Upper lobe of right lung (tissue), 1 donor: ENCODE measurements at regions of chr2 and their contacts with region 1.

Region 1: DNA sequence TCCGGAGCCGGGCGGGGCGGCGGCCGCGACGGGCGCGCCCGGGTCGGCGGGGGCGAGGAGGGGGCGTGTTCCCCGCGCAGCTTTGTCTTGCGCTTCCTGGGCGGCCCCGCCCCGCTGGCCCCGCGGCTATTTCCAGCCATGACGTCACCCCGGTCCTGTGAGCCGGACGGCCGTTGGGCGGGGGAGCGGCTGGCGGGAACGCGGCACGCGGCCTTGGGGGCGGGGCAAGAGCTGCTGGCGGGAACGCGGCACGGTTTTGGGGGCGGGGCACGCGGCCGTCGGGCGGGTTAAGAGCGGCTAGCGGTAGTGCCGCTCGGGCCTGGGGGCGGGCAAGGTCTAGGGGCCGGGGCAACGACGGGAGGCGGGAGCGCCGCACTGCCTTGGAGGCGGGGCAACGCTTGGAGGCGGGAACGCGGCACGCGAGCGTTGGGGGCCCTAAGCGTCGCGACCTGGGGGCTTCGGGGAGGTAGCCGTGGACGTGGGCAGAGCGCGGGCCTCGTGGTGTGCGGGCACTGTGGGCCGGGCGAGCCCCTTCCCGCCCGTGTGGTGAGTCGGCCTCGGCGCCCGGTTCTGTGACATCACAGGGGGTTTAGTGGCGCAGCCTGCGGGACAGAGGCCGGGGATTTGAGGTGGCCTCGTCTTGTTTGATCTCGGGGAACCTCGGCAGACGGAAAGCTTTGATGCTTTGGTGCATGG is 704 bp downstream of the KLF11 start:
- DNase-seq: peak; percentile 99
- ATAC-seq: peak; percentile 84
- H3K4me3 ChIP-seq: peak overlapping the region; percentile 66
- H3K27ac ChIP-seq: peak overlapping the region; percentile 91
- H3K4me1 ChIP-seq: peaks cover 50% of the 10 kb centered on the region
- H3K27me3 ChIP-seq: no peaks in the 10 kb centered on the region
- CTCF ChIP-seq: no peak

Region 2: GRCh38 chr2:9739531-9739964 is 304.5 kb before region 1 on chr2:
- intact Hi-C with region 1: no loop called
- DNase-seq: peak; percentile 77
- ATAC-seq: peak; percentile 78
- H3K4me3 ChIP-seq: peak overlapping the region; percentile 39
- H3K27ac ChIP-seq: peak overlapping the region; percentile 69
- H3K4me1 ChIP-seq: peaks cover 8% of the 10 kb centered on the region
- H3K27me3 ChIP-seq: no peaks in the 10 kb centered on the region
- CTCF ChIP-seq: no peak

Region 3: GRCh38 chr2:9813312-9814133 is 230.5 kb before region 1 on chr2:
- intact Hi-C with region 1: loop called (anchors 5 kb)
- DNase-seq: peak; percentile 84
- ATAC-seq: peak; percentile 87
- H3K4me3 ChIP-seq: no peak overlapping the region
- H3K27ac ChIP-seq: no peak overlapping the region
- H3K4me1 ChIP-seq: peaks cover 11% of the 10 kb centered on the region
- H3K27me3 ChIP-seq: no peaks in the 10 kb centered on the region
- CTCF ChIP-seq: peak; percentile 90

Region 4: GRCh38 chr2:9830690-9831410 is 213.2 kb before region 1 on chr2:
- intact Hi-C with region 1: no loop called
- DNase-seq: no peak
- ATAC-seq: peak; percentile 81
- H3K4me3 ChIP-seq: no peak overlapping the region
- H3K27ac ChIP-seq: peak overlapping the region; percentile 80
- H3K4me1 ChIP-seq: no peaks in the 10 kb centered on the region
- H3K27me3 ChIP-seq: no peaks in the 10 kb centered on the region
- CTCF ChIP-seq: no peak

Region 5: DNA sequence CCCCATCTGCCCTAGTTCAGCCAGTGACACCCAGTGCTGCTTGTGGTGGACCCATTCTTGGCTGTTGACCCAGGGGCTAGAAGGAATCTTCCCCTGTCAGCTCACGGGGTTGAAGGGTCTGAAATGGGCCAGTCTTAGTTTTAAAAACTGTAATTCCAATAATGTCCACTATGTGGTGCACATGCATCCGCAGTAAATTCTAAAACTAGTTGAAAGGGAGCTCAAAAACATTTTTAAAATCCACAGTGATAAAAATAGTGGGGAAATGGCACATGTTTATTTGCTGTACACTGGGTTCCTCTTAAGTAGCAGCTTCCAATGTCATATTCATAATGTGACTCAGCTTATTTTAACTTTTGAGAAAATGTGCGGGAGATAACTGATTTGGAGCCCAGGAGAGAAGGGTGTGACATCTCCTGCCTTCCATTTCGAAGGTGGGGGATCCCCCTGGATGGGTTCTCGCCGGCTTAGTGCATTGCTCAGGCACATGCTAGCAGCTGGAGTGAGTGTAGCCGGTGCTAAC is 59.8 kb before region 1 on chr2:
- intact Hi-C with region 1: loop called (anchors 10 kb)
- DNase-seq: no peak
- ATAC-seq: peak; percentile 88
- H3K4me3 ChIP-seq: no peak overlapping the region
- H3K27ac ChIP-seq: peak overlapping the region; percentile 25
- H3K4me1 ChIP-seq: peaks cover 11% of the 10 kb centered on the region
- H3K27me3 ChIP-seq: no peaks in the 10 kb centered on the region
- CTCF ChIP-seq: peak; percentile 82